Caco-2 (cell line): ENCODE measurements at regions of chr11 and their contacts with region 1.

Region 1: DNA sequence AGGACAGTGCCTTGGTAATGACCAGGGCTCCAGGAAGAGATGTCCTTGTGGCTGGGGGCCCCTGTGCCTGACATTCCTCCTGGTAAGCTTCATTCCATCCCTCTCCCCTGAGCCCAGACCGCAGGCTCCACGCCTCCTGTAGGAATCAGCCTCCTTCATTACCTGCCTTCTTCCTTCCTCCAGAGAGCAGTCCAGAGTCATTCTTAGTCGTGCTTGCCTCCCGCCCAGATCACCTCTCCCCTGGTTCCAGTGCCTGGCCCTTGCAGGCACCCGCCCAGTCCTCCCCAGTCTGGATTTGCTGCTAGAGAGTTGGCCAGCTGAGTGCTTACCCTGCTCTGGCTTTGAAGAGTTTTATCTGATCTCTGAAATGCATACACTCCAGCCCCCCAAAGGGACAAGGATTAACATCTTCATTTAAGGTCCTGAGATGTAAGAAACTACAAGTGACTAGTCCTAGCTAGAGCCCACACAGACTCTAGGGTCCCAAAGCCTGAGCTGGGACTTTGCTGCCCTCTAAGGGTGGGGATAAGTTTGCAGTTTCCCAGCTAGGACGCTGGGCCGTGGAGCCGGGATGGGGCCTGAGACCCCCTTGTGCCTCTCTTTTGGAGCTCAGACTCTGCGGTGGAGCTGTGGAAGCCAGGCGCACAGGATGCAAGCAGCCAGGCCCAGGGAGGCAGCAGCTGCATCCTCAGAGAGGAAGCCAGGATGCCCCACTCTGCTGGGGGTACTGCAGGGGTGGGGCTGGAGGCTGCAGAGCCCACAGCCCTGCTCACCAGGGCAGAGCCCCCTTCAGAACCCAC is 1.6 kb downstream of the NR1H3 start:
- DNase-seq: peak; percentile 68 to 71
- H3K4me3 ChIP-seq: no peak overlapping the region
- H3K4me3 Mint-ChIP-seq: peak overlapping the region; percentile 35
- H3K27ac Mint-ChIP-seq: peak overlapping the region; percentile 53
- H3K4me1 ChIP-seq: peaks cover 40% of the 10 kb centered on the region
- H3K4me1 Mint-ChIP-seq: peaks cover 36% of the 10 kb centered on the region
- H3K27me3 ChIP-seq: no peaks in the 10 kb centered on the region
- H3K27me3 Mint-ChIP-seq: no peaks in the 10 kb centered on the region
- CTCF ChIP-seq: peak; percentile 78 to 79

Region 2: DNA sequence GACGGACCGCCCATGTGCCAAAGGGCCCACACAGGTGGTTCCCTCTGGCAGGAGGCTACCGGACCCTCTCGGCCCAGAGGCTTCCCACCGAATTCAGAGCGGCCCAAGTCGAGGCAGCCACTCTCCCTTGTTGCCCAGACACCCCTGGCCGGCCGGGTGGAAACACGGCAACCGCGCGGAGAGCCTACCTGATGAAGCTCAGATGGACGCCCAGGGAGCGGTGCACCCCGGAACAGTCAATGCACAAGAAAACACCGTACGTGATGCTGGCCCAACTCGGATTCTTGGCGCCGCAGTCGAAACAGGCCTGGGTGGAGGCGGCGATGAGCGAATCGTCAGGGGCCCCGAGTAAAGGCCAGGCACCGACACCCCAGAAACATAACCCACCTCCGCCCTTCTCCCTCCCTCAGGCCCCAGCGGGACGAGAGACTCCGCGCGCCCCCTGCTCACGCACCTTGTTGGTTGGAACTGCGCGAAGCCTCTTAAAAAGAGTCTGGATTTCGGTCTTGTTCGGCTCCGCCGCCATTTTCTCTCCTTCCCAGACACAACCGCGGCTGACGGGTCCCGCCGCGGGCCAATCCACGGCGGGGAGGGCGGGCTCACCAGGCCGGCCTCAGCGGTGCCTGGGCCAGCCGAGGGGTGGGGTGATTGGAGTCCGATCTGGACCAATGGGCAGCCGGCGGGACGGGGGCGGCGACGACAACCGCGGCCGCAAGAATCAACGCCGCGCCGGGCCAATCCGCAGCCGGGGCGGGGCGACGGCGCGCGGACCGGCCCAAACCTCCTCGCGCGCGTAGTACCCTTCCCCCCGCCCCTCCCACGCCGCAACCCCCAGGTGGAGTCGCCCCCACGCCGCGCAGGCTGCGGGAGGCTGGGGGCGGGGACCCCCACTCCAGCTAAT is 82.8 kb before region 1 on chr11 and contains the start of gene ARFGAP2:
- CTCF ChIA-PET with region 1: interaction called, 13 read pairs
- POLR2A ChIA-PET with region 1: no interaction called
- intact Hi-C with region 1: loop called (anchors 1 kb)
- DNase-seq: peak; percentile 96 to 98
- H3K4me3 ChIP-seq: peak within 1 kb of the TSS; percentile 99
- H3K4me3 Mint-ChIP-seq: peak within 1 kb of the TSS; percentile 87
- H3K27ac Mint-ChIP-seq: peak within 1 kb of the TSS; percentile 99
- H3K4me1 ChIP-seq: peaks cover 8% of the 10 kb centered on the region; the same call in 1 of the 2 replicates
- H3K4me1 Mint-ChIP-seq: peaks cover 20% of the 10 kb centered on the region
- H3K27me3 ChIP-seq: no peaks in the 10 kb centered on the region
- H3K27me3 Mint-ChIP-seq: no peaks in the 10 kb centered on the region
- CTCF ChIP-seq: no peak
- total RNA-seq, gene ARFGAP2: 99.9 and 100.0 TPM in 2 replicates

Region 3: GRCh38 chr11:47213985-47214564 is 45.3 kb before region 1 on chr11:
- CTCF ChIA-PET with region 1: interaction called, 20 read pairs
- POLR2A ChIA-PET with region 1: interaction called, 6 read pairs
- intact Hi-C with region 1: no loop called
- DNase-seq: peak; percentile 89
- H3K4me3 ChIP-seq: peak overlapping the region; percentile 73
- H3K4me3 Mint-ChIP-seq: peak overlapping the region; percentile 79
- H3K27ac Mint-ChIP-seq: peak overlapping the region; percentile 88
- H3K4me1 ChIP-seq: peaks cover 17% of the 10 kb centered on the region
- H3K4me1 Mint-ChIP-seq: peaks cover 22% of the 10 kb centered on the region
- H3K27me3 ChIP-seq: no peaks in the 10 kb centered on the region
- H3K27me3 Mint-ChIP-seq: no peaks in the 10 kb centered on the region
- CTCF ChIP-seq: no peak

Region 4: DNA sequence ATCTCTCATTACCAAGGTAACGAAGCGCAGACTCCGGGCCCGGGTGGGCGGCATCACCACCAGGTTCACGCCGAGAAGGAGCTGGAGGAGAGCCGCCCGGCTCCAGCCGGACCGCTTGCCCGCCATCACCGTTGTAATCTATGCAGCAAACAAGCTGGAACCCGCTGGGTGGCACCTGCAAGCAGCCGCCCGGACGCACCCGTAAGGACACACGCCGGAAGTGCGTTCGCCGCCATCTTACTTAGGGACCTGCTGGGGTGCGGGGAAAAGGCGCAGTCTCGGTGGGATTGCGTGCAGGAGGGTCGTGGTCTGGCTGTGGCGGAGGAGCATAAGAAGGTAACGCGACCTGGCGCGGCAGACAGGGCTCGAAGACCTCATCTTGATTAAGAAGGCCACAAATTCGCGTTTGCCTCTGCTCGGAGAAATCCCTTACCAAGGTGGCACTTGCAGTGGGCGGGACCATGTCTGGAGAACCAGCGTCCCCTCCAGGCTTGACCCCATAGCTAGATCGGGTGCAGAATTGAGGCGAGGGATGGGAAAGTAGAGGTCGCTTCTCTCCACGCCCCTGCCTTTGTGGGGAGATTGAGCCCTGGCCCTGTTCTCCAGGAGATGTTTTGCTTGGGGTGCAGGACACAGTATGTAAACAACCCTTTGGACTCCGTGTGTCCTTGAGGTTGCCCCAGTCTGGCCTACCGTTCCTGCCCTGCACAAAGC is 10.6 kb before region 1 on chr11 and contains the start of gene ACP2:
- CTCF ChIA-PET with region 1: interaction called, 30 read pairs
- POLR2A ChIA-PET with region 1: interaction called, 12 read pairs
- intact Hi-C with region 1: loop called (anchors 1 kb)
- DNase-seq: peak; percentile 91
- H3K4me3 ChIP-seq: peak within 1 kb of the TSS; percentile 64
- H3K4me3 Mint-ChIP-seq: peak within 1 kb of the TSS; percentile 97
- H3K27ac Mint-ChIP-seq: peak within 1 kb of the TSS; percentile 99
- H3K4me1 ChIP-seq: peaks cover 11% of the 10 kb centered on the region
- H3K4me1 Mint-ChIP-seq: peaks cover 8% of the 10 kb centered on the region
- H3K27me3 ChIP-seq: no peaks in the 10 kb centered on the region
- H3K27me3 Mint-ChIP-seq: no peaks in the 10 kb centered on the region
- CTCF ChIP-seq: peak; percentile 14 to 40
- total RNA-seq, gene ACP2: 44.7 and 48.2 TPM in 2 replicates

Region 5: GRCh38 chr11:47407746-47408590 is 148.6 kb after region 1 on chr11 and contains the start of gene SLC39A13:
- CTCF ChIA-PET with region 1: no interaction called
- POLR2A ChIA-PET with region 1: no interaction called
- intact Hi-C with region 1: loop called (anchors 5 kb)
- DNase-seq: peak; percentile 96 to 98
- H3K4me3 ChIP-seq: peak within 1 kb of the TSS; percentile 70
- H3K4me3 Mint-ChIP-seq: peak within 1 kb of the TSS; percentile 89
- H3K27ac Mint-ChIP-seq: peak within 1 kb of the TSS; percentile 82
- H3K4me1 ChIP-seq: peaks cover 9% of the 10 kb centered on the region; the same call in 1 of the 2 replicates
- H3K4me1 Mint-ChIP-seq: peaks cover 9% of the 10 kb centered on the region
- H3K27me3 ChIP-seq: no peaks in the 10 kb centered on the region
- H3K27me3 Mint-ChIP-seq: no peaks in the 10 kb centered on the region
- CTCF ChIP-seq: peak; percentile 60 to 85
- total RNA-seq, gene SLC39A13: 27.1 and 30.8 TPM in 2 replicates